K562 (cell line): ENCODE measurements at regions of chr1 and their contacts with region 1.

Region 1: DNA sequence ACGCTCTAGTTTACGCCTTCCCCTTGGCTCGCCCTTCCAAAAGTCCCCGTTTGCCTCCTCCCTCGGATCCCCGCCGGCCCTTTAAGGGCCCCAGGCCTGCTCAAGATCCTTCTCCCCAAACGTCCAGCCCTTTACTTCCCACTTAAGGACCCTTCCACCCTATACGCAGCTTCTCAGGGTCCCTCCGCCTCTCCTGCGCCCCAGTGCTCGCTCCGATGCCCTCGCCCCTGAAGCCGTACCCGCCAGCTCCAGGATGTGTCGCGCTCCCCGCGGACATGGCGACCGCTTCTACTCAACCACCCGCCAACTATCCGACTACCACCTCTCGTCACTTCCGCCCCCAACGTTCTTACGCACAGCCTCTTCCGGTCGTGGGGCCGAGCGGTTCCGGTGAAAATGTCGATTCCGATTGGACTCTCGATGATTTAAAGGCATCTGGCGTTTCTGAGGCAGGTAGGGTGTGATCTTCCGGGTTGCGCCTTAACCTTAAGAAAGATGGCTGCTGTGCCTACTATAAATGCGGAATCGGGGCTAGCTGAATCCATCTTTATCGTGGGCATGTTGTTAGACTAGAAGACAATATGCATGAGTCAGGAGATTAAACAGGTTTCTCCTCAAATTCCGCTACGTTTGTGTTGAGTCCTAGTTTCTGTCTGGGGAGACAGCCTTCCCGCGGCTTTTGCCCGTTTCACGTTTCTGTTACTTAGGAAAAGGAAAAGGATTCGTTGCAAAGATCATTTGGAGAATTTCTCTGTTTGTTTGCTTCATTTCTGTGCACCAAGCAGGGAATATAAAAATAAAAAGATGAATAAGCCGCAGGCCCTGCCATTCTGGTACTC is at the start of gene KHDC4:
- DNase-seq: peak; percentile 87 to 99 (median 92)
- ATAC-seq: peak; percentile 92
- H3K4me3 ChIP-seq: peak within 1 kb of the TSS; percentile 81
- H3K27ac ChIP-seq: peak within 1 kb of the TSS; percentile 94
- H3K4me1 ChIP-seq: peaks cover 12 to 13% of the 10 kb centered on the region in 2 experiments; a peak in 4 of 5 replicates
- H3K27me3 ChIP-seq: no peaks in the 10 kb centered on the region
- CTCF ChIP-seq: peak in 2 of 3 experiments; percentile 5 to 26; a peak in 2 of 6 replicates
- EP300 ChIP-seq: peak; percentile 46; the same call in 1 of the 2 replicates
- POLR2A ChIP-seq: peak; percentile 99
- RAD21 ChIP-seq: 0 out of 4 replicates have a peak, but pooled peaks of 1 of the 2 experiments have one; percentile 3
- polyA plus RNA-seq, gene KHDC4: 12.1 to 14.4 TPM

Region 2: DNA sequence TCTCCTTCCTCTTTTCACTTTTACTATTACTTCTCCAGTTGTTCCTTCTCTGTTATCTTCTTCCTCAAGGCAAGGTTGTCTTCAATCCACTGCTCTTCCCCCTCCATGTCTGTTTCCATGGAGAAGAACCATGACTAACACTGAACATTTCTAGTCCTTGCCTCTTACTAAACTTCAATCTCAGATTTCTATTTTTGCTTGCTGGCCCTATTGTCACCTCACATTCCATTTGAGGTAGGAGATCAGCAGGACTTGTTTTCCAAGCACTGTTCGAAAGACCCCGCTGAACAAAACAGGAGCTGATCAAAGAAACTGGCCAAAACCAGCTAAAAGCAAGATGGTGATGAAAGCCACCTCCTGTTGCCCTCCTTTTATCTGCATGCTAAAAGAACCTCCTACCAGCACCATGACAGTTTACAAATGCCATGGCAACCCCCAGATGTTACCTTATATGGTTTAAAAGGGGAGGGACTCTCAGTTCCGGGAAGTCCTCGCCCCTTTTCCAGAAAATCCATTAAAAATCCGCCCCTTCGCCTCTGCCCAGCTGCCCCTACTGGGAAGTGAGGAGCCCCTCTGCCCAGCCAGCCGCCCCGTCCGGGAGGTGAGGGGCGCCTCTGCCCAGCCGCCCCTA is 99.9 kb before region 1 on chr1:
- CTCF ChIA-PET with region 1: no interaction called
- POLR2A ChIA-PET with region 1: no interaction called
- in situ Hi-C with region 1: no loop called
- intact Hi-C with region 1: no loop called
- DNase-seq: peak; percentile 64 to 94 (median 77)
- ATAC-seq: peak; percentile 94
- H3K4me3 ChIP-seq: peak overlapping the region; percentile 45
- H3K27ac ChIP-seq: peak overlapping the region; percentile 90
- H3K4me1 ChIP-seq: peaks cover 20 to 26% of the 10 kb centered on the region in 2 experiments
- H3K27me3 ChIP-seq: no peaks in the 10 kb centered on the region
- CTCF ChIP-seq: no peak
- EP300 ChIP-seq: peak; percentile 31
- POLR2A ChIP-seq: peak; percentile 81
- RAD21 ChIP-seq: no peak

Region 3: DNA sequence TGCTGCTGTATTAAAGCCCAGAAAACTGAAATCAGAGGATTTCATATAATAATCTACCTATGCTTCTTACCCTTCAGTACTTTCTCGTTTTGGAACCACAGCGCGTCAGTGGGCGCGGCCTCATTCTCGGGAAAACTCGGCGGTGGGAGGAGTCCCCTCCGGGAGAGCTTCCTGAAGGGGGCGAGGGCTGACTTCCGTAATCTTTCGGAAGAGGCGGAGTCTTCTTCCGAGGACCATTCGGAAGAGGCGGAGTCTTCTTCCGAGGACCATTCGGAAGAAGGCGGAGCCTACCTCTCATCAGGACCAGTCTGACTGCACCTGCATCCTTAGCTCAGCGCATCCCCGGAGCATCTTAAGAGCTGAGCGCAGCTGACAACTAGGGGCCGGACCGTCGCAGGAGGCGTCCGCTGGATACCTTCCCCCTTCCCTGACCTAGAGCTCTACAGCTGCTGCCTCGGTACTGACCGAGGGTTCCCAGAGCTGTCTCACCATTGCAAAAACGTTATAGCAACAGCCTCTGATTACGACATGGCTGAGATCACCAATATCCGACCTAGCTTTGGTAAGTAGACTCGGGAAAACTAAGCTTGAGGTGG is 75.0 kb before region 1 on chr1 and contains the start of gene SYT11:
- CTCF ChIA-PET with region 1: no interaction called
- POLR2A ChIA-PET with region 1: interaction called, 4 read pairs
- in situ Hi-C with region 1: no loop called
- intact Hi-C with region 1: loop called (anchors 2 kb)
- DNase-seq: peak; percentile 97 to 98 (median 97)
- ATAC-seq: peak; percentile 89
- H3K4me3 ChIP-seq: peak within 1 kb of the TSS; percentile 60
- H3K27ac ChIP-seq: peak within 1 kb of the TSS; percentile 92
- H3K4me1 ChIP-seq: peaks cover 10 to 14% of the 10 kb centered on the region in 2 experiments; a peak in 4 of 5 replicates
- H3K27me3 ChIP-seq: no peaks in the 10 kb centered on the region
- CTCF ChIP-seq: no peak
- EP300 ChIP-seq: no peak
- POLR2A ChIP-seq: peak; percentile 53; the same call in 1 of the 2 replicates
- RAD21 ChIP-seq: no peak
- polyA plus RNA-seq, gene SYT11: 0.08 to 0.11 TPM

Region 4: GRCh38 chr1:155920717-155921116 is 13.6 kb before region 1 on chr1:
- CTCF ChIA-PET with region 1: no interaction called
- POLR2A ChIA-PET with region 1: interaction called, 100 read pairs
- in situ Hi-C with region 1: no loop called
- intact Hi-C with region 1: no loop called
- DNase-seq: no peak
- ATAC-seq: no peak
- H3K4me3 ChIP-seq: no peak overlapping the region
- H3K27ac ChIP-seq: no peak overlapping the region
- H3K4me1 ChIP-seq: no peaks in the 10 kb centered on the region
- H3K27me3 ChIP-seq: no peaks in the 10 kb centered on the region
- CTCF ChIP-seq: no peak
- EP300 ChIP-seq: no peak
- POLR2A ChIP-seq: no peak
- RAD21 ChIP-seq: no peak

Region 5: GRCh38 chr1:155978325-155978972 is 44.1 kb after region 1 on chr1 and contains the start of gene ARHGEF2:
- CTCF ChIA-PET with region 1: interaction called, 4 read pairs
- POLR2A ChIA-PET with region 1: interaction called, 41 read pairs
- in situ Hi-C with region 1: no loop called
- intact Hi-C with region 1: loop called (anchors 1 kb)
- DNase-seq: peak; percentile 88 to 91 (median 89)
- ATAC-seq: peak; percentile 65
- H3K4me3 ChIP-seq: peak within 1 kb of the TSS; percentile 82
- H3K27ac ChIP-seq: peak within 1 kb of the TSS; percentile 93
- H3K4me1 ChIP-seq: peaks cover 58 to 75% of the 10 kb centered on the region in 2 experiments
- H3K27me3 ChIP-seq: no peaks in the 10 kb centered on the region
- CTCF ChIP-seq: peak; percentile 30 to 42 (median 31); a peak in 4 of 6 replicates
- EP300 ChIP-seq: no peak
- POLR2A ChIP-seq: peak; percentile 78
- RAD21 ChIP-seq: peak in 1 of 2 experiments; percentile 22; a peak in 2 of 4 replicates
- polyA plus RNA-seq, gene ARHGEF2: 7.1 to 8.9 TPM

Region 6: DNA sequence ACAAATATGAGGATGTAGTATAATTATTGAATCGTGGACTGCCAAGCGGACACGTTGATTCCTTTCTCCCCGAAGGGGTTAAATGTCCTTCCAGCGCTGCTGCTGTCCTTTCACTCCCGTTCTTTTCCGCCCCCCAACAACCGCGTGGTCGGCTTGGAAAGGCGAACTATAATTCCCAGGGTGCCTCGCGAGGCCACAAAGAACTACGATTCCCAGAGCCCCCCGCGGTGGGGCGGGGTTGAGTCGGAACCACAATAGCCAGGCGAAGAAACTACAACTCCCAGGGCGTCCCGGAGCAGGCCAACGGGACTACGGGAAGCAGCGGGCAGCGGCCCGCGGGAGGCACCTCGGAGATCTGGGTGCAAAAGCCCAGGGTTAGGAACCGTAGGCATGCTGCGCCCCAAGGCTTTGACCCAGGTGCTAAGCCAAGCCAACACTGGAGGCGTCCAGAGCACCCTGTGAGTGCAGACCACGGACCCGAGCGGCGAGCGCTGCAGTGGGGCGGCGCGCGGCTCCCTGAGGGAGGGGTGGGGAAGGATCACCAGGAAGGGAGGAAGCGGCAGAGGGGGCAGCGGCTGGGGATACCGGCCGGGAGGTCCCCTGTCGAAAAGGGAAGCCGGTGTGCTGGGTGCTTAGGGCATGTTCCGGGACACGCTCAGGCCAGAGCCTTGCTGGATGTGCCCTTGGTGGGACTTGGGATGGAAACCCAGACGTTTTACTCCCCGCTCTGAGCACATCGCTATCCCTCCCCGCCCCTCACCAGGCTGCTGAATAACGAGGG is 120.4 kb after region 1 on chr1 and contains the start of gene LAMTOR2:
- CTCF ChIA-PET with region 1: no interaction called
- POLR2A ChIA-PET with region 1: interaction called, 3 read pairs
- in situ Hi-C with region 1: no loop called
- intact Hi-C with region 1: loop called (anchors 5 kb)
- DNase-seq: peak; percentile 81 to 99 (median 89)
- ATAC-seq: peak; percentile 87
- H3K4me3 ChIP-seq: peak within 1 kb of the TSS; percentile 64
- H3K27ac ChIP-seq: peak within 1 kb of the TSS; percentile 98
- H3K4me1 ChIP-seq: peaks cover 16 to 23% of the 10 kb centered on the region in 2 experiments; a peak in 4 of 5 replicates
- H3K27me3 ChIP-seq: no peaks in the 10 kb centered on the region
- CTCF ChIP-seq: peak in 1 of 3 experiments; percentile 17; a peak in 1 of 6 replicates
- EP300 ChIP-seq: no peak
- POLR2A ChIP-seq: peak; percentile 86
- RAD21 ChIP-seq: 0 out of 4 replicates have a peak, but pooled peaks of 1 of the 2 experiments have one; percentile 4
- polyA plus RNA-seq, gene LAMTOR2: 157 to 161 TPM

Region 7: DNA sequence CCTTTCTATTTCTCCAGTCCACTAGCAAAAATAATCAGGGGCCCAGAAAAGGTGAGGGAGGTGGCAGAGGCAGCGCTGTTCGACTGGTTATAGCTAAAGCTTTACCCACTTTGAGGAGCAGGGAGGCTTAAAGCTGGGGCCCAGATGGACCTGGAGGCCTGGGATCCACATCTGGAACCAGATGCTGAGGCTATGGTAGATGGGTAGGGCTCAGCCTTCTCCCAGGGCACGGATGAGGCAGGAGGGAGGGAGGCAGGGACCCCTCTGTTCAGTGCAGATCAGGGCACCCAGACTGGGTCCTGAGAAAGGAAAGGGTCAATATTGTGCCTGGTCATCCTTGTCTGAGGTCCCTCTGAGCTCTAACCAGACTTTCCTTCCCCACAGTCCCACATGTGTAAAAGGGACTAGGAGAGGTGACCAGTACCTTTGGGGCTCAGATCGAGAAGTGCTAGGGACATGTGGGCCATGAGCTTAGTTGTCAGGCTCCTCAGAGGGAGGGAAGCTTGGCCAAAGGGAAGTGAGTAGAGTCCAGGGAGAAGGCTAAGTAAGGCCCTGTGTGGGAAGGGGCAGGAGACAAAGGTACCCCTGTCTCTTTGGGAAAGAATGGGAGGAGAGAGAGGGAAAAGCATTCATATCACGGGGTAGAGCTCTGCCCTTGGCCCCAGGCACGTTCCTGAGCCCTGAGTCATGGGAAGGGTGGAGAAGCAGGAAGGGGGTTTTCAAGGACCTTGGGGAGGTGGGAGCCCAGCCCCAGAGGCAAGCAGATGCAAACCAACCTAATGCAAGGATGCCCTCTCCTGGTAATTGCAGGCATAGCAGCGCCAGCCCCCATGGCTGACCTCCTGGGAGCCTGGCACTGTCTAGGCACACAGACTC is 195.6 kb after region 1 on chr1:
- CTCF ChIA-PET with region 1: no interaction called
- POLR2A ChIA-PET with region 1: interaction called, 3 read pairs
- in situ Hi-C with region 1: no loop called
- intact Hi-C with region 1: loop called (anchors 10 kb)
- DNase-seq: peak; percentile 72 to 87 (median 80)
- ATAC-seq: peak; percentile 75
- H3K4me3 ChIP-seq: no peak overlapping the region
- H3K27ac ChIP-seq: peak overlapping the region; percentile 76
- H3K4me1 ChIP-seq: peaks cover 51 to 53% of the 10 kb centered on the region in 2 experiments
- H3K27me3 ChIP-seq: no peaks in the 10 kb centered on the region
- CTCF ChIP-seq: peak; percentile 92 to 96 (median 94)
- EP300 ChIP-seq: no peak
- POLR2A ChIP-seq: no peak
- RAD21 ChIP-seq: peak; percentile 95 to 98